Ovary (tissue), 10 donors: ENCODE measurements at regions of chr19 and their contacts with region 1.

Region 1: GRCh38 chr19:33394006-33394849 is 20.7 kb downstream of the CEBPG start:
- DNase-seq: peak in 3 of 5 donors; percentile 32 to 55 (median 45)
- H3K4me3 ChIP-seq: no peak overlapping the region
- H3K27ac ChIP-seq: no peak overlapping the region
- H3K4me1 ChIP-seq: peaks cover 12% of the 10 kb centered on the region
- H3K27me3 ChIP-seq: no peaks in the 10 kb centered on the region
- CTCF ChIP-seq: no peak
- EP300 ChIP-seq: no peak
- POLR2A ChIP-seq: no peak

Region 2: DNA sequence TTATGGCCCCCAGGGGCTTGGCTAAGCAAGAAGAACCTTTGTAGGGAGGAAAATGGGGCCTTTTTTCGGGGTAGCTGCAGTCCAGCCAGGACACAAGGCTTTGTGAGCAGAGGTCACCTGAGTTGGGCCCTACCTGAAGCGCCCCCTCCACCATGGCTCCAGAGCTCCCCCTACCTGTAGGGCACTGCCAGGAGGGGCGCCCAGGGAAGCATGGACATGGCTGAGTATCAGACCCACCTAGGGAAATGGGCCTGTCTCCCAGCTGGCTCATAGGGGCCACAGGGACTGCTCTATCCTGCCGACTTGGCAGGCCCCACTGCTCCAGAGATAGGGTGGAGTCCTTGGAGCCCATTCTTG is 82.9 kb before region 1 on chr19:
- intact Hi-C with region 1: loop called in 1 of 4 experiments (anchors 10 kb)
- DNase-seq: no peak
- H3K4me3 ChIP-seq: no peak overlapping the region
- H3K27ac ChIP-seq: no peak overlapping the region
- H3K4me1 ChIP-seq: no peaks in the 10 kb centered on the region
- H3K27me3 ChIP-seq: no peaks in the 10 kb centered on the region
- CTCF ChIP-seq: no peak
- EP300 ChIP-seq: no peak
- POLR2A ChIP-seq: no peak